ENCODE measurements at regions of chr9 and their contacts with region 1.

Region 1: GRCh38 chr9:31542384-31543055 is 841.9 kb upstream of the ACO1 start:
- DNase-seq: no peak
- H3K4me3 ChIP-seq: no peak overlapping the region
- H3K27ac ChIP-seq: no peak overlapping the region
- H3K4me1 ChIP-seq: no peaks in the 10 kb centered on the region
- H3K27me3 ChIP-seq: no peaks in the 10 kb centered on the region
- CTCF ChIP-seq: no peak

Region 2: GRCh38 chr9:31556667-31557463 is 14.3 kb after region 1 on chr9:
- intact Hi-C with region 1: no loop called
- DNase-seq: no peak
- H3K4me3 ChIP-seq: no peak overlapping the region
- H3K27ac ChIP-seq: no peak overlapping the region
- H3K4me1 ChIP-seq: no peaks in the 10 kb centered on the region
- H3K27me3 ChIP-seq: no peaks in the 10 kb centered on the region
- CTCF ChIP-seq: no peak

Region 3: DNA sequence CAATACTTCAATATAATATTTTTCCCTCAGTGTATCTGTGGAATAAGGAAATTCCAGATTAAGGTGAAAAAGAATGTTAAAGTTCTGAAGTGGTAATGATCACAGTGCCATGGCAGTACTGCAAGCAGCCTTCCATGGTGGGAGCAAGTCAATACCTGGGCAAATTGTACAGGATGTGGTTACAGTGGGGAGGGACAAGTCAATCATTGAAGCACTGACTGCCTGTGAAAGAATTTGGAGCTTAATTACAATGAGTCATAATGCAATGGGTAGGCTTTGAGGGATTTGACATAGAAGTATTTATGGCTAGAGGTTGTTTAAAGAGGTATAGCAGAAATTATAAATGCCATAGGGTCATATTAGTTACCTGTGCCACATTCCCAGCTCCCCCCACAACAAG is 55.5 kb after region 1 on chr9:
- intact Hi-C with region 1: loop called (anchors 10 kb)
- DNase-seq: no peak
- H3K4me3 ChIP-seq: no peak overlapping the region
- H3K27ac ChIP-seq: no peak overlapping the region
- H3K4me1 ChIP-seq: no peaks in the 10 kb centered on the region
- H3K27me3 ChIP-seq: no peaks in the 10 kb centered on the region
- CTCF ChIP-seq: no peak

Measured in ascending aorta (tissue), 2 donors.